Head of caudate nucleus (tissue), 42 donors: ENCODE measurements at regions of chr20 and their contacts with region 1.

Region 1: DNA sequence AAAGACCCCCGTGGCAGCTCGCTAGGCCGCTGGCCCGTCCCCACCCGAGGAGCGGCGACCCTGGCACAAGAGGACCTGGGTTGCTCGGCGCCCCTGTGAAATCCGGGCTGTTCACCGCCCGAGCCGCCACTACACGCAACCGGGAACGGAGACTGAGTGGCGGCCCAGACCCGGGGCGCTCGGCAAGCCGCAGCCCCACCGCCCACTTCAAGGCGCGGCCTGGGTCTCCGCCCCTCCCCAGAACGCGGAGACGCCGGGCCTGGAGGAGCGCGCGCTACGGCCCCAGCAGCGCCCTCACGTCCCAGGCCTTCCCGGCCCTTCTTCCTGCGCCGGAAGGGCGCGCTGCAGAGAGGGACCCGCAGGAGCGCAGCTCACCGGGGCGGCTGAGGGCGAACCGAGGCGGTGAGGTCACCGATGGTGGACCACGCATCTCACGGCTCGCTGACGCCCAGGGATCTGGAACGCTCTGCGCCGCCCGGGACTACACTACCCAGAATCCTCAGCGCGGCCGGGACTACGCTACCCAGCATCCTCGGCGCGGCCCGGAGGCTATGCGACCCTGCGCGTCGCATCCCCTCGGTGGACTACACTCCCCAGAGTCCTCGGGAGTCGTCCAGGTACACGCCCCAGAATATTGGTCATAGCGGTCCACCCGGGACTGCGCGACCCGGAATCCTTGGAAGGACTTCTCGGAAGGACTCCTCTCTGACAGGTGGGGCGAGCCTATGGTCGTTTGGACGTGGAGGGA is at the start of gene ZNF337:
- DNase-seq: peak; percentile 89 to 98 (median 95)

Region 2: GRCh38 chr20:25865380-25866118 is 169.0 kb after region 1 on chr20:
- intact Hi-C with region 1: loop called (anchors 5 kb)
- DNase-seq: peak; percentile 79 to 96 (median 90)